Naive thymus-derived CD4-positive, alpha-beta T cell (primary cell): ENCODE measurements at regions of chr1 and their contacts with region 1.

Region 1: DNA sequence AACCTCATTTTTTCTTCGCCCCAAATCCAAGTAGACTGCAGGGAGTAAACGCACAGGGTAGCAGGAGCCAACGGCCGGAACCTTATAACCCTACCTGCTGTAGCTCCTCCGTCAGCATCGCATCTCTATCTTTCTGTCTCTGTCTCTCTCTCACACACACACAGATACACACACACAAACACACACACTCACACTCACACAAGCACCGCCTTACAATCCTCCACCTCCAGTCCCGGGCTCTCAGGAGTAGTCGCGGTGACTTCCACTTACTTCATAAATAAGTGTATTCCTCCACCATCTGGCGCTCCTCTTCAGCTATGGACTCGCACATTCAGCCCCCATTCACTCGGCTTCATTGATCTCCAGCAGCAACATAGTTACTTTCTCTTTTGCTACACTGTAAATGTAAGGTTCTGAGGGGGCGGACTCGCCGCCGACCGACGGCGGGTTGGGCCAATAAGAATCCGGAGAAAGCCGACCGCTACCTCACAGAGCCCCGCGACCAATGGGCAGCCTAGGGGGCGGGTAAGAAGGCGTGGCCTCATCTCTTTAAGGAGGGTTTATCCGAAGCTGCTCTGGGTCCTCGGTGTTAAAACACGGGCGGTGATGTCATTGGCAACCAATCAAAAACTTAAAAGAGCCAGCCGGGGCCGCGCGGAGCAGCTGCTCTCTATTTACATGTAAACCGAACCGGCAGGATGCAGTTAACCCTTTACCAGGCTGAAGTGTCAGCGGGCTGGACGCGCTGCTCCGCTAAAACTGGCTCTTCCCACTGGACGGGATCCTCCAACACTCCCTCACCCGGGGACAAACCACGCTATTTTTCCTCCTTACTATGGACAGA is at the start of gene DUSP10:
- DNase-seq: peak; percentile 88 to 100 (median 99)
- ATAC-seq: peak; percentile 91
- H3K4me3 ChIP-seq: peak within 1 kb of the TSS; percentile 85
- H3K4me3 Mint-ChIP-seq: peak within 1 kb of the TSS in 1 of 10 donors; percentile 33
- H3K27ac ChIP-seq: peak within 1 kb of the TSS; percentile 94
- H3K27ac Mint-ChIP-seq: peak within 1 kb of the TSS in 3 of 9 donors; percentile 39 to 83 (median 50)
- H3K4me1 ChIP-seq: peaks cover 9 to 17% of the 10 kb centered on the region in 2 donors
- H3K4me1 Mint-ChIP-seq: peaks cover 0 to 32% (median 21%) of the 10 kb centered on the region in 7 donors
- H3K27me3 ChIP-seq: no peaks in the 10 kb centered on the region
- H3K27me3 Mint-ChIP-seq: no peaks in the 10 kb centered on the region
- total RNA-seq, gene DUSP10: 2.5 to 60.6 (median 19.0) TPM

Region 2: GRCh38 chr1:221632072-221632471 is 109.9 kb before region 1 on chr1:
- CTCF ChIA-PET with region 1: interaction called, 3 read pairs
- POLR2A ChIA-PET with region 1: no interaction called
- intact Hi-C with region 1: loop called in 1 of 2 experiments (anchors 2 kb)
- DNase-seq: no peak
- ATAC-seq: no peak
- H3K4me3 ChIP-seq: no peak overlapping the region
- H3K4me3 Mint-ChIP-seq: no peak overlapping the region
- H3K27ac ChIP-seq: no peak overlapping the region
- H3K27ac Mint-ChIP-seq: no peak overlapping the region
- H3K4me1 ChIP-seq: no peaks in the 10 kb centered on the region
- H3K4me1 Mint-ChIP-seq: peaks cover 0 to 4% (median 0%) of the 10 kb centered on the region in 7 donors
- H3K27me3 ChIP-seq: no peaks in the 10 kb centered on the region
- H3K27me3 Mint-ChIP-seq: peaks cover 0 to 6% (median 3%) of the 10 kb centered on the region in 5 donors

Region 3: GRCh38 chr1:221777431-221778072 is 35.6 kb after region 1 on chr1:
- CTCF ChIA-PET with region 1: interaction called, 3 read pairs
- POLR2A ChIA-PET with region 1: interaction called, 14 read pairs
- intact Hi-C with region 1: loop called (anchors 1 kb)
- DNase-seq: peak in 7 of 9 donors; percentile 14 to 58 (median 32)
- ATAC-seq: peak; percentile 79
- H3K4me3 ChIP-seq: peak overlapping the region; percentile 19
- H3K4me3 Mint-ChIP-seq: peak overlapping the region; percentile 1 to 82 (median 56)
- H3K27ac ChIP-seq: no peak overlapping the region
- H3K27ac Mint-ChIP-seq: peak overlapping the region; percentile 56 to 90 (median 74)
- H3K4me1 ChIP-seq: peaks cover 37 to 38% of the 10 kb centered on the region in 2 donors
- H3K4me1 Mint-ChIP-seq: peaks cover 40 to 83% (median 51%) of the 10 kb centered on the region in 7 donors
- H3K27me3 ChIP-seq: no peaks in the 10 kb centered on the region
- H3K27me3 Mint-ChIP-seq: no peaks in the 10 kb centered on the region

Region 4: GRCh38 chr1:222009105-222009730 is 267.3 kb after region 1 on chr1:
- CTCF ChIA-PET with region 1: no interaction called
- POLR2A ChIA-PET with region 1: no interaction called
- intact Hi-C with region 1: loop called (anchors 1 kb)
- DNase-seq: peak in 6 of 9 donors; percentile 1 to 36 (median 27)
- ATAC-seq: peak; percentile 67
- H3K4me3 ChIP-seq: no peak overlapping the region
- H3K4me3 Mint-ChIP-seq: peak overlapping the region in 5 of 10 donors; percentile 6 to 53 (median 31)
- H3K27ac ChIP-seq: no peak overlapping the region
- H3K27ac Mint-ChIP-seq: peak overlapping the region in 1 of 9 donors; percentile 31
- H3K4me1 ChIP-seq: no peaks in the 10 kb centered on the region
- H3K4me1 Mint-ChIP-seq: peaks cover 0 to 4% (median 0%) of the 10 kb centered on the region in 7 donors
- H3K27me3 ChIP-seq: no peaks in the 10 kb centered on the region
- H3K27me3 Mint-ChIP-seq: peaks cover 0 to 25% (median 0%) of the 10 kb centered on the region in 5 donors

Region 5: DNA sequence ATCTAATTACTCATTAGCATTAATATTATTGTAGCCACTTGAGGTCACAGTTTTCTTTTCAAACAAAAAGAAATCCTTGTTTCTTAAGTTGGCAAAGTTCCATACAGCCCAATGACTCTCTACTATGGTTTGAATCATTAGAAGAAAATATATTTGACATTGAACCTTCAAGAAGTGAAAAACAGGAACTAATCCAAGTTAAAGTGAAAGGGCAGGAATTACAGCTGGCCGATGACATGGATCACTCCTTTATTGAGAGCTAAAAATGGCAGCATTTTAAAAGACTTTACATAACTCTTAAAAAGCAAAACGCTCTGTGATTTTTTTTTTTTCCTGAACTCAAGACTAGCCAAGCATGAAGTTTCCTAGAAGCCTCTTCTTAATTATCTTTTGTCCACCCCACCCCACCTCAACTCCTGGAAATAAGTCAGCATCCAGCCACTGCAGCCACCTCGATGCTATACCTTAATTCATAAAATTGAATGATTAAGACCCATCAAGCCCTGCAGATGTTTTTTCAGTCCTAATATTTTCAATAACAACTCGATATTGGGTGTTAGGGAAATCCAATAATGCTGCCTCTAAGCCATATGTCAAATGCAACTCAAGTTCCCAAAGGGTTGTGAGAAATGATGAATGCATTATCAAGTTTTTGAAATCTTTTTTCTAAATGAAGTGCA is 482.8 kb after region 1 on chr1:
- CTCF ChIA-PET with region 1: no interaction called
- POLR2A ChIA-PET with region 1: no interaction called
- intact Hi-C with region 1: no loop called
- DNase-seq: no peak
- ATAC-seq: no peak
- H3K4me3 ChIP-seq: no peak overlapping the region
- H3K4me3 Mint-ChIP-seq: no peak overlapping the region
- H3K27ac ChIP-seq: no peak overlapping the region
- H3K27ac Mint-ChIP-seq: no peak overlapping the region
- H3K4me1 ChIP-seq: no peaks in the 10 kb centered on the region
- H3K4me1 Mint-ChIP-seq: no peaks in the 10 kb centered on the region
- H3K27me3 ChIP-seq: no peaks in the 10 kb centered on the region
- H3K27me3 Mint-ChIP-seq: no peaks in the 10 kb centered on the region

Region 6: DNA sequence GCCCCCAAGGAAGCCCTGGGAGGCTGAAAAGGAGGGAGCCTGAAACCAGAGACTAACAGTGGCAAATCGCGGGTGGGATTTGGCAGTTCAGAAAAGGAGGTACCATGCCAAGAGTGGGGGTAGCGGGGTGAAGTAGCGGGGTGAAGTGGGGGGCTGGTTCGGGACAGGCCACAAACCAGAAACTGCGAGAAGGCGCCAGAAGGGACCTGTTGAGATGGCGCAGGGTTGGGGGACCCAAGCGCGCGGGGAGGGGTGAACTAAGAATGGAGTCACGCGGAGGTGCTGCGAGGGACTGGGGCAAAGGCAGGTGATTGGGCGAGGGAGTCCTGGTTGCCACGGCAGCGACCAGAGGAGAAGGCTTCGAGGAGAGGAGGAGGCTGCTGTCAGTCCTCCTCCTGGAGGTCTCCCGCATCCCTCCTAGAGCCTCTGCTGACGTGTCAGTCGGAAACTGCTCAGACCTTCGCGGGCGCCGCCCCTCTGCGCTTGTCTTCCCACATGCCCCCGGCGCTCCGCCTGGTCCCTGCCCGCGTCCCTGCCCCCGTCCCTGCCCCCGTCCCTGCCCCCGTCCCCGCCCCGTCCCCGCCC is 875.5 kb after region 1 on chr1:
- CTCF ChIA-PET with region 1: no interaction called
- POLR2A ChIA-PET with region 1: no interaction called
- intact Hi-C with region 1: loop called (anchors 1 to 10 kb)
- DNase-seq: peak; percentile 81 to 98 (median 89)
- ATAC-seq: peak; percentile 93
- H3K4me3 ChIP-seq: peak overlapping the region; percentile 74
- H3K4me3 Mint-ChIP-seq: peak overlapping the region; percentile 89 to 95 (median 93)
- H3K27ac ChIP-seq: peak overlapping the region; percentile 74
- H3K27ac Mint-ChIP-seq: peak overlapping the region; percentile 90 to 97 (median 95)
- H3K4me1 ChIP-seq: peaks cover 18 to 22% of the 10 kb centered on the region in 2 donors
- H3K4me1 Mint-ChIP-seq: peaks cover 14 to 39% (median 32%) of the 10 kb centered on the region in 7 donors
- H3K27me3 ChIP-seq: no peaks in the 10 kb centered on the region
- H3K27me3 Mint-ChIP-seq: peaks cover 5 to 51% (median 26%) of the 10 kb centered on the region in 5 donors

Region 7: DNA sequence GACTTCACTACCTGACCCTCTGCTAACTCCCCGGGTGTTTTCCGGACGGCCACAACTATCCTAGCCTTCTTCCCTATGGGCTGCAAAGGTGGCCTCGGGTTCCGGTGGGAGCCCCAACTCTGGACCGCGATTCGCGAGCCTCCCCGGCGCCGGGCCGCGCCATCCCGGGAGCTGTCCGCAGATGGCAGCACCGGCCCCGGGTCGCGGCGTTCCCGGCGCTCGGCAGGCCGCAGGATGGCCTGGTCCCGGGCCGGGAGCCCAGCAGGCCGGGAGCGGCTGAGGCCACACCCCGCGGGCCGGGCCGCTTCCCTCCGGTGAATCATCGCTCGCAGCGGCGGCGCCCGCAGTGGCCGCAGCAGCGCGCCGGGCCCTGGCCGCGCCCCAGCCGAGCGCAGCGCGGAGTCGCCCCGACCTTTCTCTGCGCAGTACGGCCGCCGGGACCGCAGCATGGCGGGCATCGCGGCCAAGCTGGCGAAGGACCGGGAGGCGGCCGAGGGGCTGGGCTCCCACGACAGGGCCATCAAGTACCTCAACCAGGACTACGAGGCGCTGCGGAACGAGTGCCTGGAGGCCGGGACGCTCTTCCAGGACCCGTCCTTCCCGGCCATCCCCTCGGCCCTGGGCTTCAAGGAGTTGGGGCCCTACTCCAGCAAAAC is 1970.4 kb after region 1 on chr1 and contains the start of gene CAPN2:
- CTCF ChIA-PET with region 1: no interaction called
- POLR2A ChIA-PET with region 1: no interaction called
- intact Hi-C with region 1: loop called in 1 of 2 experiments (anchors 10 kb)
- DNase-seq: peak; percentile 29 to 78 (median 51)
- ATAC-seq: peak; percentile 78
- H3K4me3 ChIP-seq: peak within 1 kb of the TSS; percentile 61
- H3K4me3 Mint-ChIP-seq: peak within 1 kb of the TSS; percentile 70 to 93 (median 84)
- H3K27ac ChIP-seq: peak within 1 kb of the TSS; percentile 83
- H3K27ac Mint-ChIP-seq: peak within 1 kb of the TSS; percentile 82 to 93 (median 88)
- H3K4me1 ChIP-seq: peaks cover 48 to 53% of the 10 kb centered on the region in 2 donors
- H3K4me1 Mint-ChIP-seq: peaks cover 52 to 69% (median 63%) of the 10 kb centered on the region in 7 donors
- H3K27me3 ChIP-seq: no peaks in the 10 kb centered on the region
- H3K27me3 Mint-ChIP-seq: peaks cover 0 to 8% (median 0%) of the 10 kb centered on the region in 5 donors
- total RNA-seq, gene CAPN2: 86.1 to 195 (median 117) TPM